ENCODE measurements at regions of chr20 and their contacts with region 1.

Region 1: DNA sequence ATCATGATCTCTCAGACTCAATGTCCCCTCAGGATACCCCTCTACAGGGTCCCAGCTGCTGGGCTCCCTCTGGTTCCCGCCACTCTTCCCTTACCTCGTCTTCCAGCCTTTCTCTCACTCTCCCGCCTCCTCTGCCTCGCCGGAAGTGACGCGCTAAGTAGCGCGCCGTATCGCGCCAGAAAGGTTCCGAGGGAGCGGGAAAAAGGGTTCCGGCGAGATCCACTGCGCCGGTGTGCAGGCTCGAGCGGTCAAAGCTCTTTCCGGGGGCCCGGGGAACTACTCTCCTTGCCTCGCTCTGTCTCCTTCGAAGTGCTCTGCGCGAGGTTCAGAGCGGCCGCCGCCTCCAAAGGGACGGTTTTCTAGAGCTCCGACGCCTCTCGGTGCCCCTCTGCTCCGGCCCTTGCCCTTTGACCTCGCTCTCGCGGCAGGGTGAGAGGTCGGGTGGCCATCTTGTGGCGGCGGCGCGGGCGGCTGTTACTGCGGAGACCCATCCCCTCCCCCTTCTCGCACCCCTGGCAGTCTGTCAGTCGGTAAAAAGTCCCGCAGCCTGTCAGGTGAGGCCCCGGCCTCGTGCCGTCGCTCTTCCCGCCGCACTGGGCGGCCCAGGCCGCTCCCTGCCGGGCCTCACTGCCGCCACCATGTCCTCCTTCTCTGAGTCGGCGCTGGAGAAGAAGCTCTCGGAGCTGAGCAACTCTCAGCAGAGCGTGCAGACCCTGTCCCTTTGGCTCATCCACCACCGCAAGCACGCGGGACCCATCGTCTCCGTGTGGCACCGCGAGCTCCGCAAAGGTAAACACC is at the starts of genes RPRD1B and TTI1:
- DNase-seq: peak; percentile 94
- H3K4me3 ChIP-seq: peak within 1 kb of the TSS; percentile 78 to 90 (median 84)
- H3K27ac ChIP-seq: peak within 1 kb of the TSS; percentile 93 to 96 (median 94)
- H3K4me1 ChIP-seq: peaks cover 0 to 48% (median 43%) of the 10 kb centered on the region in 4 donors
- H3K27me3 ChIP-seq: no peaks in the 10 kb centered on the region
- CTCF ChIP-seq: no peak
- EP300 ChIP-seq: peak in 1 of 4 donors; percentile 27
- POLR2A ChIP-seq: peak in 1 of 2 donors; percentile 64
- total RNA-seq, gene RPRD1B: 27.2 to 31.9 (median 29.7) TPM
- total RNA-seq, gene TTI1: 9.6 to 11.7 (median 11.0) TPM

Region 2: GRCh38 chr20:37693635-37694626 is 339.6 kb before region 1 on chr20 and contains the start of gene CTNNBL1:
- intact Hi-C with region 1: loop called (anchors 5 kb)
- DNase-seq: peak; percentile 98
- H3K4me3 ChIP-seq: peak within 1 kb of the TSS; percentile 64 to 92 (median 74)
- H3K27ac ChIP-seq: peak within 1 kb of the TSS; percentile 41 to 77 (median 73)
- H3K4me1 ChIP-seq: peaks cover 0 to 30% (median 18%) of the 10 kb centered on the region in 4 donors
- H3K27me3 ChIP-seq: peaks cover 0 to 4% (median 0%) of the 10 kb centered on the region in 3 donors
- CTCF ChIP-seq: no peak
- EP300 ChIP-seq: peak in 1 of 4 donors; percentile 35
- POLR2A ChIP-seq: peak; percentile 46 to 65
- total RNA-seq, gene CTNNBL1: 33.0 to 47.9 (median 42.5) TPM